Activated naive CD4-positive, alpha-beta T cell treated with anti-CD3 and anti-CD28 coated beads for 36 hours (primary cell): ENCODE measurements at regions of chr22 and their contacts with region 1.

Region 1: GRCh38 chr22:39319270-39320022 is at the start of gene RPL3:
- DNase-seq: peak; percentile 94
- H3K4me3 Mint-ChIP-seq: peak within 1 kb of the TSS; percentile 99
- H3K27ac Mint-ChIP-seq: peak within 1 kb of the TSS; percentile 100
- H3K4me1 Mint-ChIP-seq: peaks cover 42% of the 10 kb centered on the region
- H3K27me3 Mint-ChIP-seq: no peaks in the 10 kb centered on the region
- total RNA-seq, gene RPL3: 3,434 to 3,511 TPM

Region 2: DNA sequence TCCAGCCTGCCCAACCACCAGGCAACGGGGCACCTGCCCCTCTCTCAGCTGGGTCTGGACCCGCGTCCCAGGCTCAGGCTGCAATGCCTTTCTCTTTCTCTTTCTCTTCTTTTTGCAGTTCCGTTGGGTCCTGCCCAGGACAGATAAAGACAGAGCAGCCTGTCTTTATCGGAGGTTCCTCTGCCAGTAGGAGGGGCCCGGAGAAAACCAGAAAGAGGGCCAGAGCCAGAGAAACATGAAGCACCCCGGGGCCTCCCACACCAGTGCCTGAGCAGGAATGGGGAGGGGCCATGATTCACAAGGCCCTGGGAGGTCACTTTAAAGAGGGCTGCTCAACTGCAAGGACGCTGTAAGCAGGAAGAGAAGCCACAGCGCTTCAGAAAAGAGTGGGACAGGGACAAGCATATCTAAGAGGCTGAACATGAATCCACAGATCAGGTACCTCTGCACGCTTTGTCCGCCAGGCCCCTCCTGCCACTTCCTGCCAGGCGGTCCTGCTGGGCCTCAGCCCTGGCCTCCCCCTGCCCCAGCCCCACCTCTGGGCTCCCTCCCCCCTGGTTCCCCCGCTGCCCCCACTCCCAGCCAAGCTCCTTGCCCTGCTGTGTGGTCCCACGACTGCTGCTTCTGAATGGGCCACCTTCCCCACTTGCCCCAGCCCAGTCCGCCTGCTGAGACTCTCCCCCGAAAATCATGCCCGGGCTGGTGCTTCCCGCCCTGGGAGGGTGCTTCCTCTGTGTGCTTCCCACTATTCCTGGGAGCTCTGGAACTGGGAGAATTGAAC is 305.3 kb before region 1 on chr22 and contains the start of gene APOBEC3C:
- CTCF ChIA-PET with region 1: no interaction called
- intact Hi-C with region 1: loop called (anchors 5 kb)
- DNase-seq: peak; percentile 93
- H3K4me3 Mint-ChIP-seq: peak within 1 kb of the TSS; percentile 89
- H3K27ac Mint-ChIP-seq: peak within 1 kb of the TSS; percentile 95
- H3K4me1 Mint-ChIP-seq: peaks cover 34% of the 10 kb centered on the region
- H3K27me3 Mint-ChIP-seq: no peaks in the 10 kb centered on the region
- total RNA-seq, gene APOBEC3C: 71.5 to 74.1 TPM

Region 3: DNA sequence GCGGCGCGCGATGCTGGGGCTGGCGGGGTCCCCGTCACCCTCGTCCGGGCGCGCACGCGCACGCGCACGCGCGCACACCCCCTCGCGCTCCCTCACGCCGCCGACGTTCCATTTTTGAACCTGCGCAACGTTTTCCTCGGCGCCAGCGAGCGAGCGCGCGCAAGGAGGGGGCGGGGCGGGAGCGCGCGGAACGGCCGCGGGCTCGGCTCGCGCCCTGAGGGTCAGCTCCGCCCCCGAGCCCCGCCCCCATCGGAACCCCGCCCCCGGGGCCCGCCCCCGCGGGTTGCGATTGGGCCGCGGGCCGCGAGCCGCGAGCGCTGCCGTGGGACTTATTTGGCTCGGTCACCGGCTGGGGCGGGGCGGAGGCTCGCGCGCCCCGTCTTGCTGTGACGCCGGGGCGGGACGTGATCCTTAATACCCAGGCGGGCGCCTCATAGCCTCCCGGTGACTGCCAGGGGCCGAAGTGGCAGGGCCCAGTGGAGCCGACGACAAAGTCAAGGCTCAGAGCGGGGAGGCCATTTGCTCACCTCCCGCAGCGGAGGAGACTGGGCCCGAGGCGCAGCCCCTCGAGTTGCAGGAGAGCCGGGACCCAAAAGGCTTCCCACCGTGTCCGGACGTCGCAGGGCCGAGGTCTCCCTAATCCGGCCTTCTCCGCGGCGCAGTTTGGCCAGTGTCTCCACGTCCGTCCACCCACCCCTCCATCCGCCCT is 166.8 kb before region 1 on chr22 and contains the start of gene CBX7:
- CTCF ChIA-PET with region 1: interaction called, 3 read pairs
- intact Hi-C with region 1: loop called (anchors 1 kb)
- DNase-seq: peak; percentile 94
- H3K4me3 Mint-ChIP-seq: peak within 1 kb of the TSS; percentile 84
- H3K27ac Mint-ChIP-seq: peak within 1 kb of the TSS; percentile 60
- H3K4me1 Mint-ChIP-seq: peaks cover 36% of the 10 kb centered on the region
- H3K27me3 Mint-ChIP-seq: peaks cover 15% of the 10 kb centered on the region
- total RNA-seq, gene CBX7: 20.8 to 24.1 TPM

Region 4: GRCh38 chr22:39306581-39307361 is 12.7 kb before region 1 on chr22:
- CTCF ChIA-PET with region 1: interaction called, 12 read pairs
- intact Hi-C with region 1: no loop called
- DNase-seq: peak; percentile 78
- H3K4me3 Mint-ChIP-seq: no peak overlapping the region
- H3K27ac Mint-ChIP-seq: no peak overlapping the region
- H3K4me1 Mint-ChIP-seq: no peaks in the 10 kb centered on the region
- H3K27me3 Mint-ChIP-seq: no peaks in the 10 kb centered on the region

Region 5: GRCh38 chr22:39332441-39333064 is 13.1 kb after region 1 on chr22:
- CTCF ChIA-PET with region 1: interaction called, 24 read pairs
- intact Hi-C with region 1: no loop called
- DNase-seq: no peak
- H3K4me3 Mint-ChIP-seq: no peak overlapping the region
- H3K27ac Mint-ChIP-seq: peak overlapping the region; percentile 13
- H3K4me1 Mint-ChIP-seq: peaks cover 19% of the 10 kb centered on the region
- H3K27me3 Mint-ChIP-seq: no peaks in the 10 kb centered on the region

Region 6: GRCh38 chr22:39428578-39429071 is 109.2 kb after region 1 on chr22:
- CTCF ChIA-PET with region 1: no interaction called
- intact Hi-C with region 1: no loop called
- DNase-seq: no peak
- H3K4me3 Mint-ChIP-seq: no peak overlapping the region
- H3K27ac Mint-ChIP-seq: no peak overlapping the region
- H3K4me1 Mint-ChIP-seq: no peaks in the 10 kb centered on the region
- H3K27me3 Mint-ChIP-seq: no peaks in the 10 kb centered on the region

Region 7: DNA sequence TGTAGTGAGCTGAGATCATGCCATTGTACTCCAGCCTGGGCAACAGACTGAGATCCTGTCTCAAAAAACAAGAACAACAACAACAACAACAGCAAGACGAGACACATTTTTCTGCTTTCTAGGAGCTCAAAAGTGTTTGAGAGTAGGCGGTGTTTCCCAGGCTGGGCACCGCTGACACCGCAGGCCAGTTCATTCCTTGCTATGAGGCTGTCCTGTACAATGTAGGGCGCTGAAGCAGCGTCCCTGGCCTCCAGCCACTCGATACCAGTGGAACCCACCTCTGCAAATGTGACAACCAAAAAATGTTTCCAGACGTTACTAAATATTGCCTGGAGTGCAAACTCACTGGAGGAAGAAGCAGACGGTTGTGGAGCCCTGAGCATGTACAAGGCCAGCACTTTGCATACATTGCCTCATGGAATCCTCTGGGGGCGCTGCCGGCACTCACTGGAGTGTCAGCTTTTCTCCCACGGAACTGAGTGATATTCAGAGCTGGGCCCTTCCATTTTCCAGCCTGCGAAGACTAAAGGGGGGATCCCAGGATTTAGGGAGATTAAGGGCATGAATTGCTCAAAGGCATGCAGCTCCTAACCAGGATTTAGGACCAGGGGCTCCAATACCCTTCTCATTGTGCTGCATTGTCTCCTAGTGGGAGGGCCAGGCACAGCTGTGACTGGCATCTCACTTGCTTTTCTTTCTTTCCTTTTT is 176.8 kb after region 1 on chr22:
- CTCF ChIA-PET with region 1: interaction called, 10 read pairs
- intact Hi-C with region 1: no loop called
- DNase-seq: peak; percentile 74
- H3K4me3 Mint-ChIP-seq: no peak overlapping the region
- H3K27ac Mint-ChIP-seq: no peak overlapping the region
- H3K4me1 Mint-ChIP-seq: peaks cover 3% of the 10 kb centered on the region
- H3K27me3 Mint-ChIP-seq: no peaks in the 10 kb centered on the region

Region 8: GRCh38 chr22:39520054-39520891 is 200.8 kb after region 1 on chr22 and contains the start of gene ATF4:
- CTCF ChIA-PET with region 1: interaction called, 3 read pairs
- intact Hi-C with region 1: loop called (anchors 1 kb)
- DNase-seq: peak; percentile 98
- H3K4me3 Mint-ChIP-seq: peak within 1 kb of the TSS; percentile 83
- H3K27ac Mint-ChIP-seq: peak within 1 kb of the TSS; percentile 95
- H3K4me1 Mint-ChIP-seq: peaks cover 64% of the 10 kb centered on the region
- H3K27me3 Mint-ChIP-seq: peaks cover 2% of the 10 kb centered on the region
- total RNA-seq, gene ATF4: 589 to 609 TPM

Region 9: DNA sequence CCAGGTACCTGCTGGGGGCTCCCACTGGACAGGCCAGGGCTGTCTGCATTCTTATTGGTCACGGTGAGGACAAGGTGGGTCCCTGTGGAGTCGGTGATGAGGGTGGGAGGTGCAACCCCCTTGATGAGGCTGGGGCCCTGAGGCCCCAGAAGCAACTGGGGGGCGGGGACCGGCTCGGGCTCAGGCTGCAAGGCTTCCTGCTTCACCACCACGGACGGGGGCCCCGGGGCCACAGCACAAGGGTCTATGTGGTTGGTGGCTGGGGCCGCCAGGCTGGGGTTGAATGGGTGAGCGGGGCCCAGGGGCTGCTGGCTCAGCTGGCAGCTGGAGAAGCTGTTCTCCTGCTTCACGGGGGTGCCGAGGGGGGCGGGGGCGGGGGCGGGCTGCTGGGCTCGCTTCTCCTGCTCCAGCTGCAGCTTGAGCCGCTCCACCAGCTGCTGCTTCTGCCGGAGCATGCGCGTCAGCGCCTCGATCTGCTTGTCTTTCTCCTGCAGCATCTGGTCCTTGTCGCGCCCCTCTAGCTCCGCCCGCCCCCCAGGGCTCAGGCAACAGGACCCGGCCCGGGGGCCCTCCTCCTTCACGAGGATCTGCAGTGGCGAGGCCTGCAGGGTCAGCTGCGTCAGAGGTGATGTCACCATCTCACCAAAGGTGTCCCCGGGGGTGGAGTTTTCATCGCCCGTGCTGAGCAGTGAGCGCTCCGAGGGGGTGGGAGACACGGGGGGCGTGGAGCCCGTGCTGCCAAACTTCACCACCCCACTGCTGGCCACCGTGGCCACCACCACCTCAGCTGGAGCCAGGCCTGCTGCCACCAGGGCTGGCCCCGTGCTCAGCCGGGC is 1099.1 kb after region 1 on chr22:
- CTCF ChIA-PET with region 1: no interaction called
- intact Hi-C with region 1: no loop called
- DNase-seq: no peak
- H3K4me3 Mint-ChIP-seq: no peak overlapping the region
- H3K27ac Mint-ChIP-seq: no peak overlapping the region
- H3K4me1 Mint-ChIP-seq: peaks cover 16% of the 10 kb centered on the region
- H3K27me3 Mint-ChIP-seq: no peaks in the 10 kb centered on the region